CD4-positive, alpha-beta memory T cell (primary cell): ENCODE measurements at regions of chr1 and their contacts with region 1.

Region 1: DNA sequence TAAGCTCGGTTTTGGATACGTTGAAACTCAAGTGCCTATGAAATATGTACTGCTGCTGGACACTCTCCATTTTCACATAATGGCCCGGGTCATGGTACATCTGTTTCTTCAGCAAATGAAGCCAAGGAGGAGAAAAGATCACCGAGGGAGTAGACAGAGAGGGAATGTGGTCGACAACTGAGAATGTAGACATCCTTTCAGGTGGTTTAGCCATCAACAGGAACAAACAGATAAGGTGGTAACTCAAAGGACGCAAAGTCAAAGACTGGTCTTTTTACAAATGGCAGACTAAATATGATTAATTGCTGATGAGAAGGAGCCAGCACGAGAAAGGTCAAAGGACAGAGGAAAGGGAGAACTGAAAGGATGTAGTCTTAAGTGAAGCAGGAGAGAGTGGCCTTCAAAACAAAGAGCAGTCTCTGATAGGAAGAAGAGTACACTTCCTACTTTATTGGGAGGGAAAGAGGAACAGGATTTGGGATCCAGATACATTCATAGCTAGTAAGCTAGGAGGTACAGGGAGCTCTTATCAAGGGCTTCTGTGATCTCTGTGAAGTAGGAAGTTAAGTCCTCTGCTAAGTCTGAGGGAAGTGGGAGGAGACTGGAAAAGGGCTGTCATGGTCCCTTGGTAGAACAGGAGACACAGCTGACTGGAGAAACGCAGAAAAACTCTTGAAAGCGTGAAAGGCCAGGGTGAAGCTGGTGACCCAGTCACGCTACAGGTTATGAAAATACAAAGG is 28.3 kb downstream of the NUP133 start:
- DNase-seq: no peak
- H3K4me3 ChIP-seq: no peak overlapping the region
- H3K4me3 Mint-ChIP-seq: no peak overlapping the region
- H3K27ac ChIP-seq: no peak overlapping the region
- H3K27ac Mint-ChIP-seq: peak overlapping the region in 3 of 7 donors; percentile 20 to 49 (median 48)
- H3K4me1 ChIP-seq: no peaks in the 10 kb centered on the region
- H3K4me1 Mint-ChIP-seq: peaks cover 5 to 13% (median 8%) of the 10 kb centered on the region in 4 donors
- H3K27me3 ChIP-seq: no peaks in the 10 kb centered on the region
- H3K27me3 Mint-ChIP-seq: no peaks in the 10 kb centered on the region

Region 2: DNA sequence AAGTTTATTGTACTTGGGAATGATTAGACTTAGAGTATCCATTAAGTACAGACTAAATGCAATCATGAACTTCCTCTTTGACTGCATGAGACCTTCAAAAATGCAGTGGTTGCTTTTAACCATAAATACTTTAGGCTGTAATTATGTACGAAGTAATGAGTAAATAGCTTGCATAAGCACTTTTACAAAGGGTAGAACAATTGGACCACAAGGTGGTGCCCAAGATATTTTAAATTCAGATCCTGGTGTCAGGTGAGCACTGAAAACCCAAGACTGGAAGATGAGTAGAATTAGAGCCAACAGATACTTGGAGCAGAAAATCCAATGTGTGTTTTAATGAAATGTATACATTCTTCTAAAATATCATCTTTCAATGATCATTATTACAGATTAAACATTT is 787.9 kb before region 1 on chr1:
- CTCF ChIA-PET with region 1: interaction called, 11 read pairs
- POLR2A ChIA-PET with region 1: no interaction called
- intact Hi-C with region 1: no loop called
- DNase-seq: peak; percentile 30 to 46 (median 43)
- H3K4me3 ChIP-seq: no peak overlapping the region
- H3K4me3 Mint-ChIP-seq: no peak overlapping the region
- H3K27ac ChIP-seq: no peak overlapping the region
- H3K27ac Mint-ChIP-seq: no peak overlapping the region
- H3K4me1 ChIP-seq: peaks cover 9% of the 10 kb centered on the region
- H3K4me1 Mint-ChIP-seq: peaks cover 6 to 10% (median 9%) of the 10 kb centered on the region in 4 donors
- H3K27me3 ChIP-seq: no peaks in the 10 kb centered on the region
- H3K27me3 Mint-ChIP-seq: peaks cover 9 to 10% of the 10 kb centered on the region in 2 donors

Region 3: DNA sequence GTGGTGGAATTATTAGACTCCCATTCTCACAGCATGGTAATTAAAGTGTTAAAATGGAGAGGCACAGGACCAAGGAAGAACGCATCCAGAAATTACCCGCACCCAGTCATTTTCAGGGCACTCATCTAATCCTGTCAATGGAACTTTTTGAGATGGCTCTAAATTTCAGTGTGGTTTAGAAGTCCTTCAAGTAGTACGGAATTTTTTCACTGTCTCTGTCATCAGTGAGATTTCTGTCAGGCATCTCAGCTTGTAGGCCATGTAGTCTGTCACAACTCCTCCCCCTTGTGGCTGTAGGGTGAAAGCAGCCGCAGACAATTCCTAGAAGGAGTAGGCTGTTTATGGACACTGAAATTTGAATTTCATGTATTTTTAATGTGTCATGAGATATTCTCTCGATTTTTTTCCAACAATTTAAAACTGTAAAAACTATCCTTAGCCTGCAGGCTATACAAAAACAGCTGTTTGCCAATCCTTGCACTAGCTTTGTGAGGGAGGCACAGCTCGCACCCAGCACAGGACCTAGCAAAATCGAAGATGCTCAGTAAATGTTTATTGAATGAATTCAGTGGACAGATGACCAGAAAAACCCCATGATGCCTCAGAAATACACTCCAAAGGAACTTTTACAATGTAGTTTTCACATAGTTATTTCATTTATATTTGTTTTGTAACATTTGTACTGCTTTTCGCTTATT is 34.9 kb after region 1 on chr1:
- CTCF ChIA-PET with region 1: interaction called, 3 read pairs
- POLR2A ChIA-PET with region 1: no interaction called
- intact Hi-C with region 1: loop called (anchors 1 kb)
- DNase-seq: peak; percentile 67 to 72 (median 69)
- H3K4me3 ChIP-seq: no peak overlapping the region
- H3K4me3 Mint-ChIP-seq: no peak overlapping the region
- H3K27ac ChIP-seq: no peak overlapping the region
- H3K27ac Mint-ChIP-seq: peak overlapping the region in 5 of 7 donors; percentile 18 to 62 (median 36)
- H3K4me1 ChIP-seq: no peaks in the 10 kb centered on the region
- H3K4me1 Mint-ChIP-seq: peaks cover 2 to 8% (median 6%) of the 10 kb centered on the region in 4 donors
- H3K27me3 ChIP-seq: no peaks in the 10 kb centered on the region
- H3K27me3 Mint-ChIP-seq: no peaks in the 10 kb centered on the region